KBM-7 (cell line): ENCODE measurements at regions of chrX and their contacts with region 1.

Region 1: GRCh38 chrX:114519524-114519923 is 64.4 kb upstream of the HTR2C start:
- DNase-seq: no peak

Region 2: DNA sequence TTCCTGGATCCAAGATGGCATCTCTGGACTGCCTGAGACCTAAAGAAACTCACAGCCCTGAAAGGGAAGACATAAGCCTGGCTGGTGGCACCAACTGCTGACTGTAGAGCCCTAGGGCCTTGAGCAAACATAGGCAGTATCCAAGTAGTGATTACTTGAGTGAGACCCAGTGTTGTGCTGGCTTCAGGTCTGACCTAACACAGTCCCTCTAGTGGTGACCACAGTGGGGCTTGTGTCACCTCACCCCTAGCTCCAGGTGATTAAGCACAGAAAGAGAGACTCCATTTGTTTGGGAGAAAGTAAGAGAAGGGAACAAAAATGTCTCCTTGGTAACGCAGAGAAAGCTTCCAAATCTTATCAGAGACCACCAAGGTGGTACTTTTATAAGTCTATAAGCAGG is 432.0 kb before region 1 on chrX:
- in situ Hi-C with region 1: loop called (anchors 10 kb)
- DNase-seq: no peak

Region 3: GRCh38 chrX:114584375-114584943 is 64.9 kb after region 1 on chrX:
- in situ Hi-C with region 1: no loop called
- DNase-seq: no peak

Region 4: DNA sequence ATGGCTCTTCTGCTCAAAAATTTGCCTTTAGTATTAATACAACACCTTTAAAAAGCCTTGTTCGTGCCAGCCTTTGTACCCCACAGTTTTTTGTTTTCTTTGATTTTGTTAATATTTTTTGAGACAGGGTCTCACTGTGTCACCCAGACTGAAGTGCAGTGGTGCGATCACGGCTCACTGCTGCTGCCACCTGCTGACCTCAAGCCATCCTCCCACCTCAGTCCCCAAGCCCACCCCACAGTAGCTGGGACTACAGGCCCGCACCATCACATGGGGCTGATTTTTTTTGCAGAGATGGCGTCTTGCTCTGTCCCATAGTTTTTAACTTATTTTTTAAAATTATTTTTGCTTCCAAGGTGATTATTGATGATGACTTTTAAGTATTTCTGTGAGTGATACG is 198.4 kb after region 1 on chrX:
- in situ Hi-C with region 1: no loop called
- DNase-seq: peak; percentile 40

Region 5: DNA sequence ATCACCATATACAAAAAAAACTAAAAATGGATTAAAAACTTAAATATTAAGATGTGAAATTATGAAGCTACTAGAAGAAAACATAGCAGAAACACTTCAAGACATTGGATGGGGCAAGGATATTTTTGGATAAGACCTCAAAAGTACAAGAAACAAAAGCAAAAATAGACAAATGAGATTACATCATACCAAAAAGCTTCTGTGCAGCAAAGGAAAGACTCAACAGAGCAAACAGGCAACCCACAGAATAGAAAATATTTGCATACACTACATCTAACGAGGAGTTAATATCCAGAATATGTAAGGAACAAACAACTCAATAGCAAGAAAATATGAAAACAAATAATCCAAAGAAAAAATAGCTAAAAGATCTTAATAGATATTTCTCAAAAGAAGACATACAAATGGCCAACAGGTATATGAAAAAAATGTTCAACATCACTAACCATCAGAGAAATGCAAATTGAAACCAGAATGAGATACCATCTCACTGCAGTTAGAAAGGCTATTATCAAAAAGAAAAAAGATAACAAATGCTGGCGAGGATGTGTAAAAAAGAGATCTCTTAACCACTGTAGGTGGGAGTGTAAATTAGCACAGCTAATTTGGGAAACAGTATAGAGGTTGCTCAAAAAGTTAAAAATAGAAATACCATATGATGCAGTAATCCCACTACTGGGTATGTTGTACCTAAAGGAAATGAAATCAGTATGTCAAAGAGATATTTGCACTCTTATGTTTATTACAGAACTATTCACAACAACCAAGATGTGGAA is 732.1 kb after region 1 on chrX:
- in situ Hi-C with region 1: no loop called
- DNase-seq: no peak